ENCODE measurements at regions of chr14 and their contacts with region 1.

Region 1: GRCh38 chr14:58072288-58073071 is 79.5 kb downstream of the ARMH4 start:
- DNase-seq: peak; percentile 90
- H3K4me3 ChIP-seq: peak overlapping the region; percentile 29
- H3K27ac ChIP-seq: peak overlapping the region; percentile 77
- H3K4me1 ChIP-seq: peaks cover 41% of the 10 kb centered on the region
- H3K27me3 ChIP-seq: no peaks in the 10 kb centered on the region
- CTCF ChIP-seq: peak; percentile 79

Region 2: DNA sequence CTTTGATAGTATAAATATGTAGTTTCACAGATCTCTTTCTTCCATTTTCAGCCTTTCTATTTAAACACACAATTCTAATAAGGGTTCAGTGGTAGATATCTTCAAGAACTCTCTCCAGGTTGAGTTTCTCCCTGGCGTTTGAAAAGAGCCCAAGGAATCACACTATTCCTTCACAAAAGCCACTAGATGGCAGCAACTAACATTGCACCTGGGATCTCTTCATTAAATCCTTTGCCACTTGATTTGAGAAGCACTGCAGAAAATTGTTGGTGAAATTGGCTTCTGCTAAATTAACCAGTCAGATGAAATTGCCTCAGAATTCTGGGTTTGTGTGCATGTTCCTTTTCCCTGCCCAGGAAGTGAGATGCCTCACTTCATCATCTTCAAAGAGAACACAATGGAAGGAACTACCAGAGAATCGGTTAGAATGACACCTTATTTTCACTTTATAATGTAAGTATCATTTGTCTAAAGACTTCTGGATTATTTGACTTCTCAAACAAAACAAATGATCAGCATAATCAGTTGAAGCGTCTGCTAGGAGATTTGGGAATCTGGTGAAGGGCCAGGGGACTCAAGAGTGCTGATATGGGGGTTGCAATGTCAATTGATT is 585.6 kb before region 1 on chr14:
- CTCF ChIA-PET with region 1: interaction called, 4 read pairs
- POLR2A ChIA-PET with region 1: no interaction called
- intact Hi-C with region 1: loop called (anchors 5 kb)
- DNase-seq: peak; percentile 82
- H3K4me3 ChIP-seq: no peak overlapping the region
- H3K27ac ChIP-seq: no peak overlapping the region
- H3K4me1 ChIP-seq: peaks cover 14% of the 10 kb centered on the region
- H3K27me3 ChIP-seq: no peaks in the 10 kb centered on the region
- CTCF ChIP-seq: peak; percentile 82

Region 3: GRCh38 chr14:57692671-57693070 is 379.8 kb before region 1 on chr14:
- CTCF ChIA-PET with region 1: interaction called, 4 read pairs
- POLR2A ChIA-PET with region 1: no interaction called
- intact Hi-C with region 1: loop called (anchors 2 kb)
- DNase-seq: peak; percentile 74
- H3K4me3 ChIP-seq: no peak overlapping the region
- H3K27ac ChIP-seq: no peak overlapping the region
- H3K4me1 ChIP-seq: no peaks in the 10 kb centered on the region
- H3K27me3 ChIP-seq: no peaks in the 10 kb centered on the region
- CTCF ChIP-seq: peak; percentile 70

Region 4: GRCh38 chr14:57889245-57889644 is 183.2 kb before region 1 on chr14:
- CTCF ChIA-PET with region 1: no interaction called
- POLR2A ChIA-PET with region 1: no interaction called
- intact Hi-C with region 1: loop called (anchors 5 kb)
- DNase-seq: peak; percentile 29
- H3K4me3 ChIP-seq: no peak overlapping the region
- H3K27ac ChIP-seq: no peak overlapping the region
- H3K4me1 ChIP-seq: peaks cover 3% of the 10 kb centered on the region
- H3K27me3 ChIP-seq: no peaks in the 10 kb centered on the region
- CTCF ChIP-seq: no peak

Region 5: DNA sequence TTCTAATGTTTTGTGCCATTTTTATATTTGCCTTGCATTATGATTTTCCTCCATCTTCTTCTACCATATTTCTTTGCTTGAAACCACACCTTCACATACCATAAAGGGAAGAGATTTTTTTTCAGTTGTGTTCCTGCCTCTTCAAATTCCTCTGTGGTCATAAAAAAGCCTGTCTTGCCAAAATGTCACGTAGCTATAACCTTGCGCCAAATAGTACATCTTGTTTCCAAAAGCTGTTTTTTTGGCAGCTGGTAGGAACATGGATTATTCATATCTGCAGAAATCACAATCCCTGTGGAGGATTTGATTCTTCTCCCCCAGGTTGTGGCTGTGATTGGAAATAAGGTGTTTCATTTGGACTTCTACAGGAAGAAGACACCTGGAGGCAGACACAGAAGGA is 73.0 kb before region 1 on chr14:
- CTCF ChIA-PET with region 1: no interaction called
- POLR2A ChIA-PET with region 1: interaction called, 3 read pairs
- intact Hi-C with region 1: loop called (anchors 2 kb)
- DNase-seq: peak; percentile 50
- H3K4me3 ChIP-seq: peak overlapping the region; percentile 12
- H3K27ac ChIP-seq: peak overlapping the region; percentile 86
- H3K4me1 ChIP-seq: peaks cover 66% of the 10 kb centered on the region
- H3K27me3 ChIP-seq: no peaks in the 10 kb centered on the region
- CTCF ChIP-seq: no peak

Measured in A673 (cell line).